ENCODE measurements at regions of chr7 and their contacts with region 1.

Region 1: DNA sequence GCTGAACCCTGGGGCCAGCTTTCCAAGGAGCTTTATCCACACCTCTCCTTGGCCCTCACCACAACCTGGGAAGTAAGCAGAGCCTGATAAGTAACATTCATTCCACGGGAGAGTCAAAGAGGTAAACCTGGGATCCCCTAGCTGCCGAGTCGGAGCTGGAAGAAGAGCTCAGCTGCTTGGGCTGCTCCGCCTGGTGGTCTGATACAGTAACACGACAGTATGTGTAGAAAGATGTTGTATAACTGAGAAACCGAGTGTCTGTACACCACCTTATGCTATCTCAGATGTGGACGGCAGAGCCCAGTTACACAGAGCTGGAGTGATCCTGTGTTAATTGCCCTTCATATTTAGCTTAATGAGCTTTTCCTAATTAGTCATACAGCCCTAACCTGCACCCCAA is 151.3 kb upstream of the KMT2E start:
- DNase-seq: peak in 1 of 2 experiments; percentile 60
- H3K4me3 ChIP-seq: no peak overlapping the region
- H3K27ac ChIP-seq: no peak overlapping the region
- H3K4me1 ChIP-seq: no peaks in the 10 kb centered on the region
- H3K27me3 ChIP-seq: no peaks in the 10 kb centered on the region; a peak in 2 of 7 replicates
- CTCF ChIP-seq: peak; percentile 52 to 73 (median 73)
- EP300 ChIP-seq: no peak
- POLR2A ChIP-seq: no peak
- RAD21 ChIP-seq: peak; percentile 50 to 69

Region 2: DNA sequence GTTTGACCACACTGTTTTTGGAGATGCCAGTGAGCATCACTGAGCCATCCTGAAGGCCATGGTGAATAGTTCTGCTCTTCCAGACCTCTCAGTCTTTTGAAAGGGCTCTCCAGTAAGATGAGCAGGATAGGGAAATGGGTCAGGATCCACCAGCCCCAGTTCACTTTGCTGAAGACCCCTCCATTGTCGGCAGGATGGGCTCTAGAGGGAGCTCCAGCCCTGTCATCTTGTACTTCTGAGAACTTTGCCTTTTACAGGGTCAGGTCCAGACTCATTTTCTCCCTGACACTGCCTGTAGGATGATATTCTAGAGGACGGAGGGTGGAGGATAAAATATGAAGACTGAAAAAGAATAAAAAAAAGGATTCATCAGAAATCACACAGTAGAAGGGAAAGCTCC is 521.2 kb before region 1 on chr7:
- CTCF ChIA-PET with region 1: interaction called, 14 read pairs
- POLR2A ChIA-PET with region 1: no interaction called
- DNase-seq: peak in 1 of 2 experiments; percentile 61
- H3K4me3 ChIP-seq: no peak overlapping the region
- H3K27ac ChIP-seq: no peak overlapping the region
- H3K4me1 ChIP-seq: no peaks in the 10 kb centered on the region
- H3K27me3 ChIP-seq: no peaks in the 10 kb centered on the region
- CTCF ChIP-seq: peak; percentile 70 to 81 (median 79)
- EP300 ChIP-seq: no peak
- POLR2A ChIP-seq: no peak
- RAD21 ChIP-seq: peak; percentile 91 to 94

Region 3: GRCh38 chr7:104694710-104695109 is 168.0 kb before region 1 on chr7:
- CTCF ChIA-PET with region 1: no interaction called
- POLR2A ChIA-PET with region 1: no interaction called
- DNase-seq: no peak
- H3K4me3 ChIP-seq: no peak overlapping the region
- H3K27ac ChIP-seq: no peak overlapping the region
- H3K4me1 ChIP-seq: no peaks in the 10 kb centered on the region
- H3K27me3 ChIP-seq: no peaks in the 10 kb centered on the region
- CTCF ChIP-seq: no peak
- EP300 ChIP-seq: no peak
- POLR2A ChIP-seq: no peak
- RAD21 ChIP-seq: no peak

Region 4: GRCh38 chr7:104767826-104768536 is 94.7 kb before region 1 on chr7:
- CTCF ChIA-PET with region 1: interaction called, 11 read pairs
- POLR2A ChIA-PET with region 1: no interaction called
- DNase-seq: no peak
- H3K4me3 ChIP-seq: no peak overlapping the region
- H3K27ac ChIP-seq: no peak overlapping the region
- H3K4me1 ChIP-seq: peaks cover 1 to 9% (median 3%) of the 10 kb centered on the region in 4 experiments; a peak in 6 of 7 replicates
- H3K27me3 ChIP-seq: peaks cover 0 to 1% (median 0%) of the 10 kb centered on the region in 4 experiments; a peak in 1 of 7 replicates
- CTCF ChIP-seq: peak in 2 of 3 experiments; percentile 47 to 51; a peak in 3 of 4 replicates
- EP300 ChIP-seq: no peak
- POLR2A ChIP-seq: no peak
- RAD21 ChIP-seq: peak; percentile 70 to 74

Region 5: GRCh38 chr7:104814631-104815400 is 47.9 kb before region 1 on chr7:
- CTCF ChIA-PET with region 1: no interaction called
- POLR2A ChIA-PET with region 1: no interaction called
- DNase-seq: no peak
- H3K4me3 ChIP-seq: no peak overlapping the region
- H3K27ac ChIP-seq: no peak overlapping the region
- H3K4me1 ChIP-seq: peaks cover 0 to 4% (median 1%) of the 10 kb centered on the region in 4 experiments; a peak in 1 of 7 replicates
- H3K27me3 ChIP-seq: no peaks in the 10 kb centered on the region
- CTCF ChIP-seq: no peak
- EP300 ChIP-seq: no peak
- POLR2A ChIP-seq: no peak
- RAD21 ChIP-seq: no peak

Region 6: DNA sequence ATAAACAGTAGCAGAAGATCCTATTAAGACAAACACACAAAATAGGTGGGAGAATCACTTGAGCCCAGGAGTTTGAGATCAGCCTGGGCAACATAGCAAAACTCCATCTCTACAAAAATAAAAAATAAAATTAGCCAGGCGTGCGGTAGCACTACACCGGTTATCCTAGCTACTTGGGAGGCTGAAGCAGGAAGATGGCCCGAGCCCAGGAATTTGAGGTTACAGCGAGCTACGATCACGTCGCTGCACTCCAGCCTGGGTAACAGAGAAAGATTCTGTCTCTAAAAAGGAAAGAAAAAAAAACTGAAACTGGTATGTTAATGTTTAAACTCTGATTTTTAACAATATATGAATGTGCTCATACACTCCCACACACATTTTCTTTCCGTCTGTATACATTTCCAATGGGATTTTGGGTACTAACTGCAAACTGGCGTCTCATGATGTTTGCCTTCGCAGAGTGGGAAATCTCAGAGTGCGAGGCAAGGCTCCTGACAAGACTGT is 10.7 kb after region 1 on chr7:
- CTCF ChIA-PET with region 1: interaction called, 24 read pairs
- POLR2A ChIA-PET with region 1: no interaction called
- DNase-seq: no peak
- H3K4me3 ChIP-seq: no peak overlapping the region
- H3K27ac ChIP-seq: no peak overlapping the region
- H3K4me1 ChIP-seq: no peaks in the 10 kb centered on the region
- H3K27me3 ChIP-seq: no peaks in the 10 kb centered on the region
- CTCF ChIP-seq: no peak
- EP300 ChIP-seq: no peak
- POLR2A ChIP-seq: no peak
- RAD21 ChIP-seq: no peak

Region 7: DNA sequence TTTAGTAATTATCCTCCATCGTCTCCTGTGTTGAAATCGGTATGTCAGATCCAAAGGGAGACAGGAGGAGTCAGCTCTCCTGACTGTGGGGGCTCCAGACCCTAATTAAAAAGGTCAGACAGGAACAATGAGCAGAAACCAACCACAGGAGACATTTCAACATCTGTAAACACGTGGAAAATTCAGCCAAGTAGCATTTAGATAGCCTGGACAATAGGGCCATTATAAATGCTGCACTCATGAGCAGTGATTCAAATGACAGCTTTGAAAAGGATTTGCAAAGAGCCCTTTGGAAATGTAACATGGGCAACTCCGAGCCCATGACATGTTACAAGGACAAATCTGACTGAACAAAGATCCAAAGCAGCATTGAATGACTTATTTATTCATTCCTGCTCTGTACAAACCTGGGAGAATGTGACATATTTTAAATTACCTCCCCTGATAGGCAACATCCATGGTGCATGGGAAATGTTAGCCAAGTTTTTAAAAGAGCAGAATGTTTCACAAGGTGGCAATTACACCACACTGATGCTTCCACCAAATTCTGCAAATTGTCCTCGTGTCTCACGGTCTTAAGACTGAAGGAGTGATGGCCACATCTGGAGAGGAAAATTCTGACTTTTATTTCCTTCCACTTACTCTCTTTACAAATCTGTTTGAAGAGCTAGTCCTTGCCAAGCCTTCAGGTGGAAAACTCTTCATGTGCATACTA is 38.0 kb after region 1 on chr7:
- CTCF ChIA-PET with region 1: interaction called, 10 read pairs
- POLR2A ChIA-PET with region 1: interaction called, 3 read pairs
- DNase-seq: no peak
- H3K4me3 ChIP-seq: no peak overlapping the region
- H3K27ac ChIP-seq: no peak overlapping the region
- H3K4me1 ChIP-seq: no peaks in the 10 kb centered on the region
- H3K27me3 ChIP-seq: no peaks in the 10 kb centered on the region; a peak in 1 of 7 replicates
- CTCF ChIP-seq: no peak
- EP300 ChIP-seq: no peak
- POLR2A ChIP-seq: no peak
- RAD21 ChIP-seq: no peak